ENCODE measurements at regions of chr20 and their contacts with region 1.

Region 1: DNA sequence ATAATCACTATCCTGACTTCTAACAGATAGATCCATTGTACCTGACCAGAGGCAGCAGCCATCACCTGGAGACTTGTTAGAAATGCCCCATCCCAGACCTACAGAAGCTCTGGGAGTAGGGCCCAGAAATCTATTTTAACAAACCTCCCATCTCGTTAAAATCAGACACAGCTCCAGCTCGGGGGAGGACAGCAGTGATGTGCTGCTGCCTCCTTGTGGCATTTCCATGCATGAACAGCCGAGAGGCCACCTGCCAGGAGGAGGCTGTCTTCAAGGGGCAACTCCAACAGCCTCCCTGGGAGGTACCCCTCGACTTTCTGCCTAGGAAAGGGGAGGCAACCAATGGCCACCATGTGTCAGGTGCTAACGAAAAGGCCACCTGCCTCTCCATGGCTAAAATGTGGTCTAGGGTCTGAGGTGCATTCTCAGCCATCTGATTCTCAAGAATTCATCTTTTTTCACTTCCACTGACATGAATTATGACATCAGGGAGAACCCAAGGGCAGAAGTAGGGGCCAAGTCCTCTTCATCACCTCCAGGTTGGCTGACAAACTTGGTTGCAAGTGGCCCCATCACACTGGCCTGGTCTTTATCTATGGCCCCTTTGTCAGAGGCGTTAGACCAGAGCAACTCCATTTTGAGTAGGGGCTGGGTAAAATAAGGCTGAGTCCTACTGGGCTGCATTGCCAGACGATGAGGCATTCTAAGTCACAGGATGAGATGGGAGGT is 12.2 kb upstream of the KCNK15 start:
- DNase-seq: peak; percentile 78
- H3K4me3 ChIP-seq: no peak overlapping the region
- H3K27ac ChIP-seq: no peak overlapping the region
- H3K4me1 ChIP-seq: peaks cover 22% of the 10 kb centered on the region
- H3K27me3 ChIP-seq: no peaks in the 10 kb centered on the region
- CTCF ChIP-seq: peak; percentile 90

Region 2: DNA sequence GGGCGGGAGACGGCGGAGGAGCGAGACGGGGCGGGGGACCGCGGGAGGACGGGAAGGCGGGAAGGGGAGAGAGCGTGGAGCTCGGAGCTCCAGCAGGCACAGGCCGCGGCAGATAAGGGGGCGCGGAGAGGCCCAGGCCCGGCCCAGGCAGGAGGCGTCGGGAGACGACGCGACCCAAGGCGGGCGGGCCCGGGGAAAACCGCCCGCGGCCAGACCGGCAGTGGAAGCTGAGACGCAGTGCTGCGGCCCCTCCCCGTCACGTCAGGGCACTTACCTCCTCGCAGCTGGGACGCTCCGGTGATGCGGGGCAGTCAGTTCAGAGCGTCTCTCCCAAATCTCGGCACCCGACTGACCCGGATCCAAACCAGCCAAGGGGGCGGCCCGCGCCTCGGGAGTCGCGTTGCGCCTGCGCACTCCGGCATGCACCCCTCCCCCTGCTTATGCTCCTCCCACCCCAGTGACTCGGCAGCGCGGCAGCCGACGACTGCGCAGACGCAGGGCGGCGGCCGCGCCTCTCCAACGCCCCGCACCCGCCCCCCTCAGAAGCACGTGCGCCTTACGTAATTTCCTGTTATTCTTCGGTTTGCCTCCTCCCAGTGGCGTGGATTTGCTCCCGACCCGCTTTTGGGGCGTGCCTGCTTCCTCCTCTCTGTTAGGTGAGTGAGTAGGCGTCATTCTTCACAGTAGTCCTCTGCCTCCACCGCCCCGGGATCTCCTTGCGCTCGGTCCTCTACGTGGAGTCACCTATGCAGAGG is 522.9 kb before region 1 on chr20 and contains the start of gene OSER1:
- CTCF ChIA-PET with region 1: no interaction called
- POLR2A ChIA-PET with region 1: no interaction called
- intact Hi-C with region 1: loop called (anchors 10 kb)
- DNase-seq: peak; percentile 98
- H3K4me3 ChIP-seq: peak within 1 kb of the TSS; percentile 95
- H3K27ac ChIP-seq: peak within 1 kb of the TSS; percentile 94
- H3K4me1 ChIP-seq: peaks cover 20% of the 10 kb centered on the region
- H3K27me3 ChIP-seq: no peaks in the 10 kb centered on the region
- CTCF ChIP-seq: no peak
- total RNA-seq, gene OSER1: 40.7 and 50.5 TPM in 2 replicates